B cell (primary cell): ENCODE measurements at regions of chr4 and their contacts with region 1.

Region 1: GRCh38 chr4:147866532-147867271 is 134.8 kb downstream of the ARHGAP10 start:
- DNase-seq: peak; percentile 84
- ATAC-seq: peak; percentile 95
- H3K4me3 ChIP-seq: no peak overlapping the region
- H3K4me3 Mint-ChIP-seq: no peak overlapping the region
- H3K27ac ChIP-seq: no peak overlapping the region
- H3K27ac Mint-ChIP-seq: no peak overlapping the region
- H3K4me1 ChIP-seq: no peaks in the 10 kb centered on the region
- H3K4me1 Mint-ChIP-seq: no peaks in the 10 kb centered on the region
- H3K27me3 ChIP-seq: no peaks in the 10 kb centered on the region
- H3K27me3 Mint-ChIP-seq: peaks cover 2% of the 10 kb centered on the region
- CTCF ChIP-seq: peak; percentile 100

Region 2: GRCh38 chr4:146342600-146343192 is 1524.0 kb before region 1 on chr4:
- CTCF ChIA-PET with region 1: no interaction called
- POLR2A ChIA-PET with region 1: no interaction called
- intact Hi-C with region 1: loop called (anchors 5 kb)
- DNase-seq: peak; percentile 33
- ATAC-seq: no peak
- H3K4me3 ChIP-seq: no peak overlapping the region
- H3K4me3 Mint-ChIP-seq: no peak overlapping the region
- H3K27ac ChIP-seq: no peak overlapping the region
- H3K27ac Mint-ChIP-seq: no peak overlapping the region
- H3K4me1 ChIP-seq: peaks cover 3 to 5% of the 10 kb centered on the region in 2 donors
- H3K4me1 Mint-ChIP-seq: peaks cover 9% of the 10 kb centered on the region
- H3K27me3 ChIP-seq: no peaks in the 10 kb centered on the region
- H3K27me3 Mint-ChIP-seq: no peaks in the 10 kb centered on the region
- CTCF ChIP-seq: peak; percentile 88

Region 3: GRCh38 chr4:147518846-147519767 is 347.6 kb before region 1 on chr4:
- CTCF ChIA-PET with region 1: interaction called, 30 read pairs
- POLR2A ChIA-PET with region 1: no interaction called
- intact Hi-C with region 1: loop called (anchors 2 kb)
- DNase-seq: peak; percentile 32
- ATAC-seq: no peak
- H3K4me3 ChIP-seq: no peak overlapping the region
- H3K4me3 Mint-ChIP-seq: no peak overlapping the region
- H3K27ac ChIP-seq: no peak overlapping the region
- H3K27ac Mint-ChIP-seq: no peak overlapping the region
- H3K4me1 ChIP-seq: no peaks in the 10 kb centered on the region
- H3K4me1 Mint-ChIP-seq: no peaks in the 10 kb centered on the region
- H3K27me3 ChIP-seq: no peaks in the 10 kb centered on the region
- H3K27me3 Mint-ChIP-seq: peaks cover 3% of the 10 kb centered on the region
- CTCF ChIP-seq: peak; percentile 72

Region 4: GRCh38 chr4:147837435-147837834 is 29.3 kb before region 1 on chr4:
- CTCF ChIA-PET with region 1: interaction called, 11 read pairs
- POLR2A ChIA-PET with region 1: no interaction called
- intact Hi-C with region 1: no loop called
- DNase-seq: no peak
- ATAC-seq: no peak
- H3K4me3 ChIP-seq: no peak overlapping the region
- H3K4me3 Mint-ChIP-seq: no peak overlapping the region
- H3K27ac ChIP-seq: no peak overlapping the region
- H3K27ac Mint-ChIP-seq: no peak overlapping the region
- H3K4me1 ChIP-seq: no peaks in the 10 kb centered on the region
- H3K4me1 Mint-ChIP-seq: no peaks in the 10 kb centered on the region
- H3K27me3 ChIP-seq: no peaks in the 10 kb centered on the region
- H3K27me3 Mint-ChIP-seq: no peaks in the 10 kb centered on the region
- CTCF ChIP-seq: no peak

Region 5: DNA sequence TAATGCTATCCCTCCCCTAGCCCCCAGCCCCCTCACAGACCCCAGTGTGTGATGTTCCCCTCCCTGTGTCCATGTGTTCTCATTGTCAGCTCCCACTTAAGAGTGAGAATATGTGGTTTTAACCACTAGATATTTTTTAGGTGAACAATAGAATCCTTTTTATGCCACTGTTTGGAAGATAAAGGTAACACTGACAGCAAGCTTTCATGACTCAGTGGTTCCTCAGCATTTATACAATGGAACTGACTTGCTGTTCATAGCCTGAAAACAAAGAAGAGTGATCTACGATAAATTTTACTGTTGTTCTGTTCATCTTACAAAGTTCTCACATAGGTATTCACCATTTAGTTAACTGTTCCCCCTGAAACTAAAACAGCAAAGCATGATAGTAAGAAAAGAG is 13.0 kb after region 1 on chr4:
- CTCF ChIA-PET with region 1: interaction called, 48 read pairs
- POLR2A ChIA-PET with region 1: no interaction called
- intact Hi-C with region 1: no loop called
- DNase-seq: no peak
- ATAC-seq: no peak
- H3K4me3 ChIP-seq: no peak overlapping the region
- H3K4me3 Mint-ChIP-seq: no peak overlapping the region
- H3K27ac ChIP-seq: no peak overlapping the region
- H3K27ac Mint-ChIP-seq: no peak overlapping the region
- H3K4me1 ChIP-seq: no peaks in the 10 kb centered on the region
- H3K4me1 Mint-ChIP-seq: no peaks in the 10 kb centered on the region
- H3K27me3 ChIP-seq: no peaks in the 10 kb centered on the region
- H3K27me3 Mint-ChIP-seq: no peaks in the 10 kb centered on the region
- CTCF ChIP-seq: no peak